B cell (primary cell): ENCODE measurements at regions of chr22 and their contacts with region 1.

Region 1: DNA sequence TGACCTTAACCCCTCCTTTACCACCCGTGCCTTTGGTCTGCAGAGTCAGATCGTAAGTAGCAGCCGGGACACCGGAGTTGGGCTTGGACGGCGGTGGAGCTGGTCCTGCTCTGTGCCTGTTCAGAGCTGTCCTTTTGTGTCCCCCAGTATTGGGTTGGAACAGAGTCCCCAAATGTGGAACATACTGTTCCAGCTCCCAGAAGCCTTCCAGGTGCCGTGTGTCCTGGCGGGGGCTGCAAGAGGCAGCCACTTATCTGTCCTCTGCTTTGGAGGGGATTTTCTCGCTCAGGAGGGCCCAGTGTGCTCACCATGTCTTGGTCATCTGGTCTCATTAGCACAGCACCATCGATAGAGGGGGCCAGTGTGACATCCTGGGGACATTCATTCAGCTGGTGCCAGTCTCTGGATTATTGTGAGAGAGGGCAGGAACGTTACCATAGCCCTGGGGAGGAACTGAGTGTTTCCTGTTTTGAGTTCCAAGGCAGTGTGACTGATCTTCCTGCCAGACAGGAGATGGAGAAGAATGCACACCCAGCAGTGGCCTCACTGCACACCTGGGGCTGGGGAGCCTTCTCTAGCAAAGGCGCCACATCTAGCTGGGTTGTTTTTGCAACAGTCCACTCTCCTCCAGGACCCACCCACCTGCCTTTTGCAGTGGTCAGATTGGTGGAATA is 12.4 kb downstream of the CRELD2 start:
- DNase-seq: peak; percentile 92
- ATAC-seq: peak; percentile 42
- H3K4me3 ChIP-seq: peak overlapping the region in 4 of 5 experiments; percentile 4 to 29 (median 25)
- H3K4me3 Mint-ChIP-seq: peak overlapping the region; percentile 77
- H3K27ac ChIP-seq: peak overlapping the region; percentile 94 to 97
- H3K27ac Mint-ChIP-seq: peak overlapping the region; percentile 95
- H3K4me1 ChIP-seq: peaks cover 56 to 69% of the 10 kb centered on the region in 2 donors
- H3K4me1 Mint-ChIP-seq: peaks cover 53% of the 10 kb centered on the region
- H3K27me3 ChIP-seq: no peaks in the 10 kb centered on the region
- H3K27me3 Mint-ChIP-seq: no peaks in the 10 kb centered on the region
- CTCF ChIP-seq: peak; percentile 80

Region 2: GRCh38 chr22:48393041-48393370 is 1537.9 kb before region 1 on chr22:
- CTCF ChIA-PET with region 1: no interaction called
- POLR2A ChIA-PET with region 1: no interaction called
- intact Hi-C with region 1: no loop called
- DNase-seq: no peak
- ATAC-seq: no peak
- H3K4me3 ChIP-seq: no peak overlapping the region
- H3K4me3 Mint-ChIP-seq: no peak overlapping the region
- H3K27ac ChIP-seq: no peak overlapping the region
- H3K27ac Mint-ChIP-seq: no peak overlapping the region
- H3K4me1 ChIP-seq: no peaks in the 10 kb centered on the region
- H3K4me1 Mint-ChIP-seq: no peaks in the 10 kb centered on the region
- H3K27me3 ChIP-seq: no peaks in the 10 kb centered on the region
- H3K27me3 Mint-ChIP-seq: peaks cover 8% of the 10 kb centered on the region
- CTCF ChIP-seq: no peak

Region 3: GRCh38 chr22:49827853-49828598 is 102.8 kb before region 1 on chr22 and contains the start of gene BRD1:
- CTCF ChIA-PET with region 1: no interaction called
- POLR2A ChIA-PET with region 1: no interaction called
- intact Hi-C with region 1: loop called (anchors 5 kb)
- DNase-seq: peak; percentile 76
- ATAC-seq: peak; percentile 76
- H3K4me3 ChIP-seq: peak within 1 kb of the TSS; percentile 41 to 68 (median 66)
- H3K4me3 Mint-ChIP-seq: peak within 1 kb of the TSS; percentile 87
- H3K27ac ChIP-seq: peak within 1 kb of the TSS; percentile 66 to 81
- H3K27ac Mint-ChIP-seq: peak within 1 kb of the TSS; percentile 85
- H3K4me1 ChIP-seq: peaks cover 43 to 51% of the 10 kb centered on the region in 2 donors
- H3K4me1 Mint-ChIP-seq: peaks cover 44% of the 10 kb centered on the region
- H3K27me3 ChIP-seq: peaks cover 0 to 5% (median 0%) of the 10 kb centered on the region in 4 experiments
- H3K27me3 Mint-ChIP-seq: no peaks in the 10 kb centered on the region
- CTCF ChIP-seq: no peak
- total RNA-seq, gene BRD1: 73.3 and 77.8 TPM in 2 replicates

Region 4: GRCh38 chr22:49960159-49961004 is 29.5 kb after region 1 on chr22 and contains the start of gene PIM3:
- CTCF ChIA-PET with region 1: interaction called, 60 read pairs
- POLR2A ChIA-PET with region 1: interaction called, 94 read pairs
- intact Hi-C with region 1: loop called (anchors 1 kb)
- DNase-seq: peak; percentile 98
- ATAC-seq: peak; percentile 78
- H3K4me3 ChIP-seq: peak within 1 kb of the TSS; percentile 65 to 88 (median 77)
- H3K4me3 Mint-ChIP-seq: peak within 1 kb of the TSS; percentile 91
- H3K27ac ChIP-seq: peak within 1 kb of the TSS; percentile 85 to 94
- H3K27ac Mint-ChIP-seq: peak within 1 kb of the TSS; percentile 91
- H3K4me1 ChIP-seq: peaks cover 22 to 36% of the 10 kb centered on the region in 2 donors
- H3K4me1 Mint-ChIP-seq: peaks cover 38% of the 10 kb centered on the region
- H3K27me3 ChIP-seq: no peaks in the 10 kb centered on the region
- H3K27me3 Mint-ChIP-seq: no peaks in the 10 kb centered on the region
- CTCF ChIP-seq: no peak
- total RNA-seq, gene PIM3: 127 and 128 TPM in 2 replicates

Region 5: GRCh38 chr22:49979587-49980264 is 48.9 kb after region 1 on chr22:
- CTCF ChIA-PET with region 1: interaction called, 31 read pairs
- POLR2A ChIA-PET with region 1: interaction called, 5 read pairs
- intact Hi-C with region 1: no loop called
- DNase-seq: peak; percentile 52
- ATAC-seq: no peak
- H3K4me3 ChIP-seq: no peak overlapping the region
- H3K4me3 Mint-ChIP-seq: no peak overlapping the region
- H3K27ac ChIP-seq: no peak overlapping the region
- H3K27ac Mint-ChIP-seq: no peak overlapping the region
- H3K4me1 ChIP-seq: peaks cover 28 to 37% of the 10 kb centered on the region in 2 donors
- H3K4me1 Mint-ChIP-seq: peaks cover 29% of the 10 kb centered on the region
- H3K27me3 ChIP-seq: peaks cover 0 to 11% (median 5%) of the 10 kb centered on the region in 4 experiments
- H3K27me3 Mint-ChIP-seq: peaks cover 14% of the 10 kb centered on the region
- CTCF ChIP-seq: peak; percentile 51

Region 6: GRCh38 chr22:50016988-50017700 is 86.3 kb after region 1 on chr22:
- CTCF ChIA-PET with region 1: interaction called, 12 read pairs
- POLR2A ChIA-PET with region 1: interaction called, 4 read pairs
- intact Hi-C with region 1: no loop called
- DNase-seq: peak; percentile 23
- ATAC-seq: peak; percentile 62
- H3K4me3 ChIP-seq: no peak overlapping the region
- H3K4me3 Mint-ChIP-seq: peak overlapping the region; percentile 34
- H3K27ac ChIP-seq: no peak overlapping the region
- H3K27ac Mint-ChIP-seq: no peak overlapping the region
- H3K4me1 ChIP-seq: peaks cover 44 to 48% of the 10 kb centered on the region in 2 donors
- H3K4me1 Mint-ChIP-seq: peaks cover 43% of the 10 kb centered on the region
- H3K27me3 ChIP-seq: peaks cover 0 to 32% (median 9%) of the 10 kb centered on the region in 4 experiments
- H3K27me3 Mint-ChIP-seq: peaks cover 3% of the 10 kb centered on the region
- CTCF ChIP-seq: no peak

Region 7: DNA sequence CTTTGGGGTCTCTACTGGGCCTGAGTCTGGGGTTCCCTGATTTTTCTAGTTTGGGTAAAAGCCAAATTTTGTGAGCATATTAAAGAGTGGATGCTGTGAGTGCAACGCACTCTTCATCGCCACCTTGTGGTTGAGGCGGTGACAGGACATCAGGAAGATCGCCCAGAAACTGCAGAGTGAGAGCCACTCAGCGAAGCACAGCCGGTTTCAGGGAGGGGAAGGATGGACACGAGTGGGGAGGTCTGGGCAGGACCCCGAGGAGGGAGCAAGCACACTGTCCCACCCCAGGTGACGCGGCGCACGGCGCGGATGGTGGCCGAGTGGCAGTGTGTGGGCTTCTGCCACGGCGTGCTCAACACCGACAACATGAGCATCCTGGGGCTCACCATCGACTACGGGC is 279.0 kb after region 1 on chr22:
- CTCF ChIA-PET with region 1: interaction called, 4 read pairs
- POLR2A ChIA-PET with region 1: no interaction called
- intact Hi-C with region 1: loop called (anchors 5 kb)
- DNase-seq: peak; percentile 85
- ATAC-seq: peak; percentile 26
- H3K4me3 ChIP-seq: no peak overlapping the region
- H3K4me3 Mint-ChIP-seq: no peak overlapping the region
- H3K27ac ChIP-seq: no peak overlapping the region
- H3K27ac Mint-ChIP-seq: peak overlapping the region; percentile 27
- H3K4me1 ChIP-seq: peaks cover 15 to 26% of the 10 kb centered on the region in 2 donors
- H3K4me1 Mint-ChIP-seq: peaks cover 34% of the 10 kb centered on the region
- H3K27me3 ChIP-seq: no peaks in the 10 kb centered on the region
- H3K27me3 Mint-ChIP-seq: no peaks in the 10 kb centered on the region
- CTCF ChIP-seq: peak; percentile 85